ENCODE measurements at regions of chr1 and their contacts with region 1.

Region 1: GRCh38 chr1:203340112-203340804 is 10.7 kb downstream of the FMOD start:
- DNase-seq: peak; percentile 90
- H3K4me3 ChIP-seq: no peak overlapping the region
- H3K27ac ChIP-seq: no peak overlapping the region
- H3K4me1 ChIP-seq: peaks cover 0 to 11% of the 10 kb centered on the region in 2 experiments; a peak in 2 of 4 replicates
- H3K27me3 ChIP-seq: peaks cover 35% of the 10 kb centered on the region; the same call in 1 of the 2 replicates
- CTCF ChIP-seq: peak; percentile 96
- EP300 ChIP-seq: peak in 1 of 2 experiments; percentile 45; a peak in 2 of 4 replicates
- RAD21 ChIP-seq: peak; percentile 98

Region 2: GRCh38 chr1:203304919-203305808 is 35.1 kb before region 1 on chr1 and contains the start of gene BTG2:
- CTCF ChIA-PET with region 1: interaction called, 65 read pairs
- POLR2A ChIA-PET with region 1: no interaction called
- DNase-seq: peak; percentile 99
- H3K4me3 ChIP-seq: peak within 1 kb of the TSS; percentile 84 to 94
- H3K27ac ChIP-seq: peak within 1 kb of the TSS; percentile 45 to 83; a peak in 3 of 4 replicates
- H3K4me1 ChIP-seq: peaks cover 22 to 53% of the 10 kb centered on the region in 2 experiments
- H3K27me3 ChIP-seq: no peaks in the 10 kb centered on the region
- CTCF ChIP-seq: no peak
- EP300 ChIP-seq: no peak
- RAD21 ChIP-seq: no peak
- polyA plus RNA-seq, gene BTG2: 26.2 and 33.5 TPM in 2 replicates

Region 3: GRCh38 chr1:203368624-203369451 is 28.6 kb after region 1 on chr1:
- CTCF ChIA-PET with region 1: interaction called, 157 read pairs
- POLR2A ChIA-PET with region 1: no interaction called
- DNase-seq: no peak
- H3K4me3 ChIP-seq: no peak overlapping the region
- H3K27ac ChIP-seq: no peak overlapping the region
- H3K4me1 ChIP-seq: peaks cover 0 to 17% of the 10 kb centered on the region in 2 experiments; a peak in 2 of 4 replicates
- H3K27me3 ChIP-seq: peaks cover 12% of the 10 kb centered on the region
- CTCF ChIP-seq: peak; percentile 19; the same call in 1 of the 2 replicates
- EP300 ChIP-seq: no peak
- RAD21 ChIP-seq: no peak

Region 4: DNA sequence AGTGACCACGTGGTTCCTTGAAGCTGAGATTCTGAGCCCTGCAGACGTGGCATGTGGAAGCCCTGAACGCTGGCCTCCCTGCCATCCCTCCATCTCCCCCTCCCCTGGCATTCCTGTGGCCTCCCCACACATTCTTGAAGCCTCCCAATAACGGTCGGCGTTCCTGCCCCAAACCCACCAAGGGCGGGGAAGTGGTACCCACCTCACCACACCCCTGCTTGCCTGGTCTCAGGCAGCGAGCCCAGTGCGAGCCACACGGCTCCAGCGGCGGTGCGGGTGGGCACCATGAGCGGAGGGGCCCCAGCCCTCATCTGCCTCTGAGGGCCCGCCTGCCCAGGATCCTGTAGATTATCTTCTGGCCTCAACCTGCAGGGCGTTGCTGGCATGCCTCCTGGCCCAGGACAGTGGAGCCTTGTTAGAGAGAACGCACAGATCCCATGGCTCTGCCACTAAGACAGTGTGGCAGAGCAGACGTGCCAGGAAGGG is 114.8 kb after region 1 on chr1:
- CTCF ChIA-PET with region 1: interaction called, 14 read pairs
- POLR2A ChIA-PET with region 1: no interaction called
- DNase-seq: no peak
- H3K4me3 ChIP-seq: no peak overlapping the region
- H3K27ac ChIP-seq: no peak overlapping the region
- H3K4me1 ChIP-seq: peaks cover 0 to 16% of the 10 kb centered on the region in 2 experiments; a peak in 3 of 4 replicates
- H3K27me3 ChIP-seq: no peaks in the 10 kb centered on the region
- CTCF ChIP-seq: no peak
- EP300 ChIP-seq: no peak
- RAD21 ChIP-seq: no peak

Region 5: DNA sequence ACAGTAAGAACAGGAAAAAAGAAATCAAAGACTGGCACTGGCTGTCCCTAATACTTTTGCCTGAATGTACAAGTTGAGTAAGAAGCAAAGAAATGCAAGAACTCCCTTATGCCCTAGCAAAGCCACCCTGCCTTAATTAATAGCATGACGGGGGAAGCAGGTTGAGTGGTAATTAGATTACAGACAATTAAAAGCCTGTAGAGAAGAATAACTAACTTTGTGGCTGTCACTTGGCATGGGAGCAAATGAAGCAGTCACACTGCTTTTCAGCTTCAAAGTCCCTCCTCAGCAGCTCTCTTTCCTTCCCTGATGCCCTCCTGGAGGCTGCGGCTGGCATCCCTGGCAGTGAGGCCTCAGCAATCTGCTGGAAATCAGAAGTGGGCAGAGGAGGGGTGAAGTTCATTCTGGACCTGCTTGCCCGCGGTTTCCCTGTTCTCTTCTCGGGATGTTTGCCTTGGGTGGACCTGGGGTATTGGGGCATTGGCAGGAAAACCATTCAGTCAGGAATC is 157.1 kb after region 1 on chr1:
- CTCF ChIA-PET with region 1: interaction called, 351 read pairs
- POLR2A ChIA-PET with region 1: no interaction called
- DNase-seq: no peak
- H3K4me3 ChIP-seq: no peak overlapping the region
- H3K27ac ChIP-seq: no peak overlapping the region
- H3K4me1 ChIP-seq: peaks cover 0 to 8% of the 10 kb centered on the region in 2 experiments; a peak in 1 of 4 replicates
- H3K27me3 ChIP-seq: no peaks in the 10 kb centered on the region
- CTCF ChIP-seq: no peak
- EP300 ChIP-seq: no peak
- RAD21 ChIP-seq: no peak

Measured in SK-N-SH (cell line).